PC-3 (cell line): ENCODE measurements at regions of chr16 and their contacts with region 1.

Region 1: DNA sequence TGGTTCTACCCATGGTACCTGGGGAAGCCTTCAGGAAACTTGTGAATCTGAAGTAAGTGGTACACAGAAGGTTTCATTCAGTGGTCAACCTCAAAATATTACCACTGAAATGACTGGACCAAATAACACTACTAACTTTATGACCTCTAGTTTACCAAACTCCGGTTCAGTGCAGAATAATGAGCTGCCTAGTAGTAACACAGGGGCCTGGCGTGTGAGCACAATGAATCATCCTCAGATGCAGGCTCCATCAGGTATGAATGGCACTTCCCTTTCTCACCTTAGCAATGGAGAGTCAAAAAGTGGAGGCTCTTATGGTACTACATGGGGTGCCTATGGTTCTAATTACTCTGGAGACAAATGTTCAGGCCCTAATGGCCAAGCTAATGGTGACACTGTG is 55.9 kb upstream of the SLC5A11 start:
- DNase-seq: no peak
- ATAC-seq: no peak; the same call in 1 of the 2 replicates
- H3K4me3 ChIP-seq: no peak overlapping the region
- H3K27ac ChIP-seq: no peak overlapping the region
- H3K4me1 ChIP-seq: no peaks in the 10 kb centered on the region
- H3K27me3 ChIP-seq: no peaks in the 10 kb centered on the region
- CTCF ChIP-seq: no peak

Region 2: DNA sequence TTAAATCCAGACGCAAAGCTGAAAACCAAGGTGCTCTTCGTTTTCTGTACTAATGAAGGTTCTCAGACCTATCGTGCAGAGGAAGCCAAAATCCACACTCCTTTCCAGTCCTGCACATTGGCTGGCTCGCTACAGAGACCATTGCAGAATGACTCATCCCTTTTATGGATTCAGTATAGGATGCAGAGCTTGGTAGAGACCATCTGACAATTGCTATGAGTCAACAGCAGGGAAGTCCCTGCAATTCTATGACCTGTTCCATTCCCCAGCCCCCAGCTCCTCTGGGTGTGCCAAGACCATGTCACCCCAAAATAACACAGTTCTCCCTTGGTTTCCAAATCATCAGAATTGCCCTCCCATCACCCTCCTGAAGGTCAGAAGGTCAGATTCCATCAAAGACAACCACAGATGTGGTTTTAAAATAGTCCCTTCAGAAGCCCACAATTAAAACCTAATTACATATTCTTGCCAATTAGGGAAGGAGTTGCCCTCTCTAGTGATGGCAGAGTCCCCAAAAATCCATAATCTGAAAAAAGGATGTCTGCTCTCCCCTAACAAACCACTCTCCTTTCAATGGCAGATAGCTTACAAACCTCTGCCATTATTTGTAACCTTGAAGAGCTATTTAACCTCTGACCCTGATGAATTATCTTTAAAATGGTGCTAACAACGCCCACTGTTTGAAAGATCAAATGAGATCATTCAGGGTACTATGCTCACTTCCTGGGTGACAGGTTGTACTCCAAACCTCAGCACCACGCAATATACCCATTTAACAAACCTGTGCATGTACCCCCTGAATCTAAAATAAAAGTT is 358.7 kb before region 1 on chr16:
- CTCF ChIA-PET with region 1: no interaction called
- POLR2A ChIA-PET with region 1: interaction called, 34 read pairs
- intact Hi-C with region 1: no loop called
- DNase-seq: peak; percentile 29
- ATAC-seq: peak; percentile 46; the same call in 1 of the 2 replicates
- H3K4me3 ChIP-seq: no peak overlapping the region
- H3K27ac ChIP-seq: no peak overlapping the region
- H3K4me1 ChIP-seq: no peaks in the 10 kb centered on the region
- H3K27me3 ChIP-seq: peaks cover 32% of the 10 kb centered on the region
- CTCF ChIP-seq: no peak

Region 3: GRCh38 chr16:24729362-24729984 is 60.4 kb before region 1 on chr16 and contains the start of gene TNRC6A:
- CTCF ChIA-PET with region 1: no interaction called
- POLR2A ChIA-PET with region 1: no interaction called
- intact Hi-C with region 1: no loop called
- DNase-seq: peak; percentile 74
- ATAC-seq: peak; percentile 87
- H3K4me3 ChIP-seq: peak within 1 kb of the TSS; percentile 75
- H3K27ac ChIP-seq: peak within 1 kb of the TSS; percentile 71
- H3K4me1 ChIP-seq: peaks cover 15% of the 10 kb centered on the region
- H3K27me3 ChIP-seq: no peaks in the 10 kb centered on the region
- CTCF ChIP-seq: no peak
- total RNA-seq, gene TNRC6A: 16.2 and 20.3 TPM in 2 replicates